Activated T-helper 2 cell treated with anti-CD3 and anti-CD28 coated beads, Interferon-gamma antibody, Interleukin-2, Interleukin-4, amounts not matched to agents 10 μg/mL and 5 μg/mL and 100 μg/mL, durations not matched to agents 14 hours and 24 hours and 36 hours (primary cell): ENCODE measurements at regions of chr9 and their contacts with region 1.

Region 1: GRCh38 chr9:94603259-94604160 is 9.9 kb upstream of the FBP2 start:
- DNase-seq: peak; percentile 54
- H3K4me3 Mint-ChIP-seq: no peak overlapping the region
- H3K27ac Mint-ChIP-seq: no peak overlapping the region
- H3K4me1 Mint-ChIP-seq: peaks cover 4% of the 10 kb centered on the region
- H3K27me3 Mint-ChIP-seq: peaks cover 28% of the 10 kb centered on the region

Region 2: GRCh38 chr9:94554439-94555391 is 48.8 kb before region 1 on chr9 and contains the start of gene PCAT7:
- intact Hi-C with region 1: loop called (anchors 2 kb)
- DNase-seq: no peak
- H3K4me3 Mint-ChIP-seq: no peak within 1 kb of the TSS
- H3K27ac Mint-ChIP-seq: no peak within 1 kb of the TSS
- H3K4me1 Mint-ChIP-seq: no peaks in the 10 kb centered on the region
- H3K27me3 Mint-ChIP-seq: peaks cover 18% of the 10 kb centered on the region
- total RNA-seq, gene PCAT7: not detected in 2 replicates